Testis (tissue), 5 donors: ENCODE measurements at regions of chr5 and their contacts with region 1.

Region 1: DNA sequence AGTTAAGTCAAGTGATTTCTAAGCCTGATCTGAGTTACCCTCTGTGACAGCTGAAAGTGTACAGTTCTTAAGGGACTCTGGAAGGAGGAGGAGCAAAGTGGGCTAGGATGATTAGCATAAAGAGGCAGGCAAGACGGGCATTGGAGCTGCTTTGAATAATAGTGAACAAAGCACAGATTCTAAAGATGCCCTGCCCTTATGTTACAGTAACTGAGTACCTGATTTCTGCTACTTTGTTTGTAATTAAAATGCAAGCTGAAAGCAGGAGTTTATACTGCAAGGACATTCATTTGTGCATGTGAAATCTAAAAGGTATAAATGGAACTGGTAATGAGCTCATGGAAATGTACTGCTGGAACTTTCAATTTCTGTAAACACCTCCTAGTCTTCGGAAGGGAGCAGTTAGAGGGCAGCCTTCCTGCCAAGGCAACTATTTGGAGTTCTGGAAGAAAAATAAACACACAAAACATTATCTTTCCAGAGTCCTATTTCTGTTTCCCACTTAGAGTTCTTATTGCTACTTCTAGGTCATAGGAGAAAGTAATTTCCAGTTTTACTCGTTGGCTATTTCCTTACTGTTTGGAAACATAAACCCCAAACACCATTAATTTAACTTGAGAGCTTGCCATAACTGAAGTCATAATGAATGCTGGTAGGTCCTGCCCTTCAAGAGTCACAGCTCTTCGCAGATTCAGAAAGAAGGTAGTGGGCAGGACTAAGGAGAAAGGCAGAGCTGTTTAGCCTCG is at the start of gene RANBP3L:
- DNase-seq: peak; percentile 74
- H3K4me3 ChIP-seq: peak within 1 kb of the TSS in 1 of 2 donors; percentile 21
- H3K27ac ChIP-seq: peak within 1 kb of the TSS; percentile 80 to 82
- H3K4me1 ChIP-seq: peaks cover 17% of the 10 kb centered on the region
- H3K27me3 ChIP-seq: no peaks in the 10 kb centered on the region
- CTCF ChIP-seq: no peak
- POLR2A ChIP-seq: no peak
- total RNA-seq, gene RANBP3L: 19.9 to 26.3 TPM

Region 2: GRCh38 chr5:36241631-36242533 is 60.1 kb before region 1 on chr5 and contains the start of gene NADK2:
- intact Hi-C with region 1: loop called (anchors 5 kb)
- DNase-seq: peak; percentile 96
- H3K4me3 ChIP-seq: peak within 1 kb of the TSS; percentile 88 to 99
- H3K27ac ChIP-seq: peak within 1 kb of the TSS; percentile 99 to 100
- H3K4me1 ChIP-seq: peaks cover 34% of the 10 kb centered on the region
- H3K27me3 ChIP-seq: no peaks in the 10 kb centered on the region
- CTCF ChIP-seq: peak; percentile 64 to 83 (median 80)
- POLR2A ChIP-seq: peak; percentile 23
- total RNA-seq, gene NADK2: 27.1 to 42.2 TPM